ENCODE measurements at regions of chr1 and their contacts with region 1.

Region 1: GRCh38 chr1:206036663-206037455 is 13.2 kb upstream of the CTSE start:
- DNase-seq: no peak
- H3K27ac ChIP-seq: no peak overlapping the region
- CTCF ChIP-seq: no peak

Region 2: GRCh38 chr1:205950280-205950679 is 86.6 kb before region 1 on chr1:
- CTCF ChIA-PET with region 1: interaction called, 11 read pairs
- POLR2A ChIA-PET with region 1: no interaction called
- DNase-seq: peak; percentile 73
- H3K27ac ChIP-seq: peak overlapping the region; percentile 99
- CTCF ChIP-seq: no peak

Region 3: DNA sequence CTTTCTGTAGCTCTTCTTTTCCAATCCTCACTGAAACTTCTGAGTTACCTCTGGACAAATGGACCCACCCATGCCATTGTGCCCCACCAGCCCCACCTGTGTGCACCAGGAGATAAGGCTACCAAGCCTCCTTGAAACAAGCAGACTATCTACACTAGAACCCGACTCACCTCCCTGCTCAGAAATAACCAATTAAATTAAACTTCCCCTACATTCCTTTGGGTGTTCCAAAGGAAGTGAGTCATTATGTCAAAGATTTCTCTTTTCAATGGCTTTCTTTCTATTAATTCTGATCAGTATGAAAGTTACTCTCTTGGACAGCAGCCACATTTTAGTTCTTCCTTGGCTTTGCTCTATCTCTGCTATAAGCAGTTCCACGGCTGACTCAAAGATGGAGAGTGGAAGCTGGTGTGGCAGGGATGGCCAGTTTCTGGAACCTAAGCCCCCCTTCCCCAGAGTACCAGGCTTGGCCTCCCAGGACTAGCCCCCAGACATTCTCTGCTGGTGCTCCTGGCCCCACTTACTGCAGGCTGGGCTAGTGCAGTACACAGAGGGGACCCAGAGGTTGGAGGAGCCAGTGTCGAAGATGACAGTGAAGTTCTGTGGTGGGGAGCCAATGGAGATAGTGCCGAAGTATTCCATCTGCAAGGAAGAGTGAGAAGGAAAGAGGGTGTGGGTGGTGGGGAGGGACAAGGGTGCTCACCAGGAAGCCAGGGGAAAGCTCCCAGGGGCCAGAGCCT is 15.1 kb before region 1 on chr1:
- CTCF ChIA-PET with region 1: no interaction called
- POLR2A ChIA-PET with region 1: no interaction called
- DNase-seq: peak; percentile 86
- H3K27ac ChIP-seq: peak overlapping the region; percentile 73
- CTCF ChIP-seq: no peak